ENCODE measurements at regions of chr6 and their contacts with region 1.

Region 1: DNA sequence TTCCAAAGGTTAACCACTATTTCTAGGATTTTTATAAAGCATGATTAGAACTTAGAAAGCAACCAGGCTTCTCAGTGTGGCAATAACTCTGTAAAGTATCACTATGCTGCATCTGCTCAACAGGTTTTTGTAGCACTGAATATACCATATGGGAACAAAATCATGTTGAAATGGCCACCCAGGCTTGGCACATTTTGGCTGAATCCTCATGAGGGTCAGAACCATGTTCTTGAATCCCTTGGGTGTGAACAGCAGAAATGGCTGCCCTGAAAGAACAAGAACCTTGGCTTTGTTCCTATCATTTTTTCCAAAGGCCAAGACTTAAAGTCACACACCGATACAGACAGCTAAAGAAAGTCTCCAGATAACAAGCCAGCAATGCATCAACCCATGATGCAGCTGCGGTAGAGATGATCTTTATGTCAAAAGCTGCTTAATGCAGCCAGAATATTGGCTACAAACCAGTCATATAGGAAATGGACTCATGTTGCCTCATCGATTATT is 283.0 kb upstream of the NOX3 start:
- DNase-seq: no peak
- H3K4me3 ChIP-seq: no peak overlapping the region
- H3K27ac ChIP-seq: peak overlapping the region; percentile 69
- H3K4me1 ChIP-seq: peaks cover 10% of the 10 kb centered on the region
- H3K27me3 ChIP-seq: no peaks in the 10 kb centered on the region
- CTCF ChIP-seq: no peak

Region 2: DNA sequence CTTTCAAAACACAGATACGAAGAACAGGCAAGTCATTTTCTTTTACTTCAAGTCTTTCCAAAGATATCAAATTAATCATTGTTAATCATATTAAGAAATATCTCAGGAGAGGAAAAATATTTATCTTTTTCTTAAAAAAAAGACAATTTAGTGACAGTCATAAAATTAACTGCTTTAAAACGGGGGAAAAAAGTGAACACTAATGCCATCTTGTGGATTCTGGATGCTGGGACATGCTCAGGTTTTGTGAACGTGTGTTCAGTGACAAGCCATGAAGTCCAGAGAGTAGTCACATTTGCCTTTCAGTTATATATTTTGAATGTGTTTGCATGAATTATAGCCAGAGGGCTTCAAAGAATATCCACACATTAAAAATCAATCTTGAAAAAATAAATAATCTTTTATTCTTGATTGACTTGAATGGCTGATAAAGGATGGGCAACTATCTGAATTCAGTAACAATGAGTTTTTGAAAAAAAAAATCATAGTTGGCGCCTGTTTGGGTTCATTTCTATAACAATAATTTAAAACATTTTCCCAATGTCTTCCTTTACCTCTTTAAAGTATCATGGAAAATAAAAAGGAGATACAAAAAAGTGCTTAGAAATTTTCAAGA is 208.3 kb before region 1 on chr6:
- CTCF ChIA-PET with region 1: no interaction called
- POLR2A ChIA-PET with region 1: no interaction called
- intact Hi-C with region 1: loop called (anchors 10 kb)
- DNase-seq: peak; percentile 72
- H3K4me3 ChIP-seq: no peak overlapping the region
- H3K27ac ChIP-seq: no peak overlapping the region
- H3K4me1 ChIP-seq: peaks cover 20% of the 10 kb centered on the region
- H3K27me3 ChIP-seq: no peaks in the 10 kb centered on the region
- CTCF ChIP-seq: peak; percentile 83

Region 3: DNA sequence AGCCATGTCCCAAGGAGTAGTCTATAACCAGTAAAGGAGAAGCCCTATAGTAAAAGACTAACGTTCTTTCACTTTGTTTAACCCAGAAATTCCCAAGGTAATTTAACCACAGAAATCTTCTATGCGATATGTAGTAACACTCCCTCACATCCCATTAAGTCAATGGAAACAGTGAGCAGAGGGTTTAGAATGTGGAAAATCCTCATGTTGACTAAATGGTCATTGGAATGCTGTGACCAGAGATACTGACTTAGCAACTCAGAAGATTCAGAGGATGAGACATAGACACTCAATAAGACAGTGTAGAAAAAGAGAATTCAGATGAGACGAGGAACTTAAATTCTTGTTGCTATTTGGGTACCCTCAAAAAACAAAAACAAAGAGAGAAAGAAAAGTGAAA is 279.2 kb after region 1 on chr6:
- CTCF ChIA-PET with region 1: no interaction called
- POLR2A ChIA-PET with region 1: no interaction called
- intact Hi-C with region 1: loop called (anchors 2 kb)
- DNase-seq: no peak
- H3K4me3 ChIP-seq: no peak overlapping the region
- H3K27ac ChIP-seq: no peak overlapping the region
- H3K4me1 ChIP-seq: peaks cover 37% of the 10 kb centered on the region
- H3K27me3 ChIP-seq: no peaks in the 10 kb centered on the region
- CTCF ChIP-seq: no peak

Region 4: DNA sequence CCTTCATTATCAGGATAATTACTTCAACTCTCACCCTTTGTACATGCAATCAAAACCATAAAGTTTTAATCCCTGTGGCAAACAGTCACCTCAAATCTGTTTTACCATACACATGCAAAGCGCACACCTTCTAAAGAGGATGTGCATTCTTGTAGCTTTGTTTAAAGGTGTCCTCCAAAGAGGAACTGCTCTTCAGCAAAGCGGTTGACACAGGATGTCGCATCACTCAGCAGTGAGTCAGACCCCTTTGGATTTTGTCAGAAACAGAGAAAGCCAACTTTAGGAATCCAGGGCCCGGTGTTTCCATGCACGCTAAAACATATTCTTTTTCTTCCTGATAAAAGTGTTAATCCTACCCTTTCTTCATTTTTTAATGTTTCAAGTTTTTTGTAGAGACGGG is 770.3 kb after region 1 on chr6:
- CTCF ChIA-PET with region 1: no interaction called
- POLR2A ChIA-PET with region 1: no interaction called
- intact Hi-C with region 1: no loop called
- DNase-seq: no peak
- H3K4me3 ChIP-seq: no peak overlapping the region
- H3K27ac ChIP-seq: no peak overlapping the region
- H3K4me1 ChIP-seq: no peaks in the 10 kb centered on the region
- H3K27me3 ChIP-seq: no peaks in the 10 kb centered on the region
- CTCF ChIP-seq: no peak